CD4-positive, alpha-beta memory T cell (primary cell): ENCODE measurements at regions of chr16 and their contacts with region 1.

Region 1: DNA sequence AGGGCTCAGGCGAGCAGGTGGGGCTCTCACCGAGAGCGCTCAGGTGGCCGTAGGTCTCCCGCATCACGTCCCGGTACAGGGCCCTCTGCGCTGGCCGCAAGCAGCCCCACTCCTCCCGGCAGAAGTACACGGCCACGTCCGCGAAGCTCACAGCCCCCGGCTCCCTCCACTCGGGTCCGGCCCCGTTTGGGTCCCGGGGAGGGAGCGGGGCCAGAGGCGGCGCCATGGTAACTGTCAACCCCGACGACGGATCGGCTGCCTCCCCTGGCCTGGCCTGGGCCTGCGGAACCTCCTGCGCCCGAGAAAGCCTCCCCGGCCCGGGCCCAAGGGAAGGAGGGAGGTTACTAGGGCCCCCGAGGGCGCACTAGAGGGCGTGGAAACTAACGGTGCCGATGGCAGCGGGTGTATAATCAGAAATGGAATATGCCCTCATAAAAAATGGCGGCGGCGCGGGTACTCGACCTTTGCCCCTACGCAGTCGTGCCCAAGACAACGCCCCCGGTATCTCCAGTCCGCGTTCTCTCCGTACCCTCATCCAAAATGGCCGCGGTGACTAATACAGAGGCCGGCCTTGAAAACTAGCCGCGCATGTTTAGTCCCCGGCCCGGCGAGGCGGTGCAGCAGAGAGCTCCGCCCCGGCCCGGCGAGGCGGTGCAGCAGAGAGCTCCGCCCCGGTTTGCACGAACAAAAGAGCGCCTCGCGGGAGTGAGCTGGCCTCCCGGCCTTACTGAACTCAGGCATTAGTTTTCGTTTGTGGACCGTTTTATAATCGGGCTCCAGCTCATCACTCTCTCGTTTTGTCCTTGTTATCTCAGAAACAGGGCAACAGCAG is at the start of gene ZNF764:
- DNase-seq: peak; percentile 94 to 98 (median 96)
- H3K4me3 ChIP-seq: peak within 1 kb of the TSS; percentile 58 to 75
- H3K4me3 Mint-ChIP-seq: peak within 1 kb of the TSS; percentile 88 to 94 (median 92)
- H3K27ac ChIP-seq: peak within 1 kb of the TSS; percentile 95
- H3K27ac Mint-ChIP-seq: peak within 1 kb of the TSS; percentile 93 to 97 (median 95)
- H3K4me1 ChIP-seq: peaks cover 54% of the 10 kb centered on the region
- H3K4me1 Mint-ChIP-seq: peaks cover 19 to 55% (median 37%) of the 10 kb centered on the region in 4 donors
- H3K27me3 ChIP-seq: no peaks in the 10 kb centered on the region
- H3K27me3 Mint-ChIP-seq: no peaks in the 10 kb centered on the region
- total RNA-seq, gene ZNF764: 28.9 to 29.3 TPM

Region 2: GRCh38 chr16:30445408-30446202 is 112.6 kb before region 1 on chr16 and contains the start of gene SEPHS2:
- CTCF ChIA-PET with region 1: interaction called, 18 read pairs
- POLR2A ChIA-PET with region 1: no interaction called
- intact Hi-C with region 1: no loop called
- DNase-seq: peak; percentile 93 to 98 (median 94)
- H3K4me3 ChIP-seq: peak within 1 kb of the TSS; percentile 92 to 94
- H3K4me3 Mint-ChIP-seq: peak within 1 kb of the TSS; percentile 89 to 98 (median 96)
- H3K27ac ChIP-seq: peak within 1 kb of the TSS; percentile 96
- H3K27ac Mint-ChIP-seq: peak within 1 kb of the TSS; percentile 87 to 98 (median 96)
- H3K4me1 ChIP-seq: peaks cover 42% of the 10 kb centered on the region
- H3K4me1 Mint-ChIP-seq: peaks cover 24 to 44% (median 36%) of the 10 kb centered on the region in 4 donors
- H3K27me3 ChIP-seq: no peaks in the 10 kb centered on the region
- H3K27me3 Mint-ChIP-seq: no peaks in the 10 kb centered on the region
- total RNA-seq, gene SEPHS2: 42.0 to 44.4 TPM

Region 3: DNA sequence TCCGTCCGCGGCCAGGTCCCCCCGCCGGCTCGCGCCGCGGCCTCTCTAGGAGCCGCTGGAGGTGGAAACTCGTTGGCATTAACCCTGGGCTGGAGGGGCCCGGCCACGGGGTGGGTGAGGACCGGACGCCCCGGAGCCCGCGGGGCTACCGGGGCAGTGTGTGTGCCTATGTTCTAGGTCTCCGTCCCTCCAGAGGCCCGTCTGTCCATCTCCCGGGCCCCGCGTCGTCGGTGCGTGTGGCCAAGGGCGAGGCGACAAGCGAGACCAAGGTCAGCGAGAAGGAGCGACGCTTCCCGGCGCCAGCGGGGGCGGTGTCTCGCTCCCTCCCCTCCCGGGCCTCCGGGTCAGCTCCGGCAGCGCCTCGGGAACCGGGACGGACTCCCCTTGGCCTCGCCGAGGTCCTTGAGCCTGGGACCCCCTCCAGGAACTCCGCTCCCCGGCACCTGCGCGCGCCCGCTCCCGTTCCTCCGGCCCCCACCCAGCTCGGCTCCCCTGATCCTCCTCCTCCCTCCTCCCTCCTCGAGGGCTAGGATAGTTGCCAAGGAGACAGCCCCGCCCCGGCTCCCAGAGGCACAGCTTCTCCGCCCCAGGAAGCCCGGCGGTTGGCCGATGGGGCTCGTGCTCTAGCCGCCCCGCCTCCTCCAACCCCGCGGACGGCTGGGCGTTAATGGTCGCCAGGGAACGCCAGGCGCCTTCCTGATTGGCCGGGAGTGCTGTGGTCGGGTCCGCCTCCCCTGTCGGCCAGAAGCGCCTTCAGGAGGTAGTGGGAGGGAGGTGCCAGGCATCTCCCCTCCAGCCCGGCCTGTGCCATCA is 31.1 kb before region 1 on chr16:
- CTCF ChIA-PET with region 1: interaction called, 16 read pairs
- POLR2A ChIA-PET with region 1: interaction called, 457 read pairs
- intact Hi-C with region 1: loop called (anchors 1 kb)
- DNase-seq: peak; percentile 81 to 92 (median 82)
- H3K4me3 ChIP-seq: peak overlapping the region in 1 of 2 donors; percentile 75
- H3K4me3 Mint-ChIP-seq: peak overlapping the region; percentile 81 to 88 (median 85)
- H3K27ac ChIP-seq: peak overlapping the region; percentile 72
- H3K27ac Mint-ChIP-seq: peak overlapping the region; percentile 86 to 95 (median 89)
- H3K4me1 ChIP-seq: peaks cover 43% of the 10 kb centered on the region
- H3K4me1 Mint-ChIP-seq: peaks cover 24 to 46% (median 34%) of the 10 kb centered on the region in 4 donors
- H3K27me3 ChIP-seq: no peaks in the 10 kb centered on the region
- H3K27me3 Mint-ChIP-seq: no peaks in the 10 kb centered on the region

Region 4: DNA sequence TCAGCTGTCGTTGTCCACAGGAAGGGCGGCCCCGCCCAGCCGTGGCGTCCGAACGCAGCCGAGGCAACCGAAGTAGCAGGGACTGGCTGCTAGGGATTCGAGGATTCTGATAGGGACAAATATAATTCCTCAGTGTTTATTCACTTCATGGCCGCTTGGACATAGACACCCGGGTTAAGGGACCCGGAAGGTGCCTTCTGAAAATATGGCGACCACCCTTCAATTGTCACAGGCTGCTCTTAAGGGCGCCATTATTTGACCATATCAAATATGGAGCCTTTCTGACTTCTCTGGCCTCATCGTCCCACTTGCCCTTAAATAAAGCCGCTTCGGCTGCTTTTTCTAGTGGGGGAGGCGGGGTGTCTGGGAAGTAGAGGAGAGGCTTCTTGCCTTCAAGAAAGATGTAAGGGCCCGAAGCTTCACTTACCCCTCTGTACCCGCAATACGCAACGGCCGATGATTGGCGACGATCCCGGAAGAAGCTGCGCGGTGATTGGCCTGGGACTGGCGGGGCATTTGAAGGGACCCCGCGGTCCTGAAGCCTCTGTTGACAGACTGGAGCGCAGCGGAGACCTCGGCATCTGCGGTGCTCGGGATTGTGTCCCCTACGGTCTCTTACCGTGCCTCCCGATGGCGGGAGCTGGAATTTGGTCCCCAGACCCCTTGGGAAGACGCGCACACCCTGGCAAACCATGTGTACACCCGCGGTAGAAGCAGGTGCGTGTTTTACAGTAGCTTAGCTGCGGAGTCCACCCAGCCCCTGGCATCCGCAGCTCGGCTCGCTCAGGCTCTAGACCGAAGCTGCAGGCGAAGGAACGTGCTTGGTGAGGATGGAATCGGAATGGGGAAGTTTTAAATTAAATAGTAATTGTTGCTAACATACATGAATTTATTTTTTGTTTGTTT is 13.8 kb after region 1 on chr16 and contains the start of gene ZNF688:
- CTCF ChIA-PET with region 1: interaction called, 22 read pairs
- POLR2A ChIA-PET with region 1: interaction called, 188 read pairs
- intact Hi-C with region 1: loop called (anchors 1 kb)
- DNase-seq: peak; percentile 94 to 100 (median 97)
- H3K4me3 ChIP-seq: peak within 1 kb of the TSS; percentile 65 to 71
- H3K4me3 Mint-ChIP-seq: peak within 1 kb of the TSS; percentile 86 to 96 (median 91)
- H3K27ac ChIP-seq: peak within 1 kb of the TSS; percentile 90
- H3K27ac Mint-ChIP-seq: peak within 1 kb of the TSS; percentile 96 to 97 (median 97)
- H3K4me1 ChIP-seq: peaks cover 50% of the 10 kb centered on the region
- H3K4me1 Mint-ChIP-seq: peaks cover 22 to 51% (median 36%) of the 10 kb centered on the region in 4 donors
- H3K27me3 ChIP-seq: no peaks in the 10 kb centered on the region
- H3K27me3 Mint-ChIP-seq: no peaks in the 10 kb centered on the region
- total RNA-seq, gene ZNF688: 21.4 to 22.7 TPM

Region 5: DNA sequence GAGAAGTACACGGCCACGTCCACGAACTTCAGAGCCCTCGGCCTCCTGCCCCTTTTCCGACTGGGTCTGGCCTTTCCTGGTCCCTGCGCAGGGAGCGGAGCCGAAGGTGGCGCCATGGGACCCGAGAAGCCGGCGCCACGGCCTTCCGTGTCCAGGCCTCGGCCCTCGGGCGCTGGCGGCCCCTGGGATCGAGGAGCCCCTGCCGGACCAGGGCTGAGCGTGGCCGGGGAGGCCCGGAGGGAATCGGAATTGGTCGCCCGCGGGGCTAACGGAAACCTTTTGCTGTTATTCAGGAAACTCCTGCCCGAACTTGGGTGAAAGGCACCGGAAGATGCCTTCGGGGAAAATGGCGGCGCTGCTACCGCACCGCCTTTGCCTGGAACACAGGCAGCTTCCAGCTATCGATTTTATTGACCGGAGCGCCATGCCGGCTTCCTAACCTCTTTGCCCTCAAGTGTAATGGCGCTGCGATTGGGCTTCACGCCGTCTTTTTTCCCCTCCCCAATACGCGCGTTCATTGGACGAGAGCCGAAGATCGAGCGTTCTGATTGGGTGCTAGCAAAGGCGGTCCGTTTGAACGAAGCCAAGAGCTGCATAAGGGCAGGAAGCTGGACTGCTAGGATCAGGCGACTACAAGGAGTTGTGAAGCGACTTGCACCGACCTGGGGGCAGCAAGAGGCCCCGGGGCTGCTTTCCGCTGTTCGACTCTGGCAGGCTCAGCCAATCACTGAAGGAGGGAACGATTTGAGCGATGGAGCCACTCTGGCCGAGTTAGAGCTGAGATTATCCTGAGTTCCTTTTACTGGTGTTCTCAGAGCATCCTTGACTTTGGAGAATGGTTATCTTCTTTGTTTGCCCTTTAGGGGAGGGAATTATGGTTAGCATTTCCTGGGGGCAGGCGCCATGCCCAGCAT is 52.0 kb after region 1 on chr16 and contains the start of gene ZNF689:
- CTCF ChIA-PET with region 1: interaction called, 5 read pairs
- POLR2A ChIA-PET with region 1: interaction called, 18 read pairs
- intact Hi-C with region 1: no loop called
- DNase-seq: peak; percentile 92 to 98 (median 95)
- H3K4me3 ChIP-seq: peak within 1 kb of the TSS; percentile 71 to 99
- H3K4me3 Mint-ChIP-seq: peak within 1 kb of the TSS; percentile 85 to 96 (median 94)
- H3K27ac ChIP-seq: peak within 1 kb of the TSS; percentile 97
- H3K27ac Mint-ChIP-seq: peak within 1 kb of the TSS; percentile 93 to 98 (median 96)
- H3K4me1 ChIP-seq: peaks cover 21% of the 10 kb centered on the region
- H3K4me1 Mint-ChIP-seq: peaks cover 10 to 18% (median 13%) of the 10 kb centered on the region in 4 donors
- H3K27me3 ChIP-seq: no peaks in the 10 kb centered on the region
- H3K27me3 Mint-ChIP-seq: no peaks in the 10 kb centered on the region
- total RNA-seq, gene ZNF689: 13.1 to 14.5 TPM

Region 6: GRCh38 chr16:30650369-30651123 is 92.4 kb after region 1 on chr16 and contains the start of gene PRR14:
- CTCF ChIA-PET with region 1: interaction called, 6 read pairs
- POLR2A ChIA-PET with region 1: interaction called, 14 read pairs
- intact Hi-C with region 1: no loop called
- DNase-seq: peak; percentile 96 to 99 (median 97)
- H3K4me3 ChIP-seq: peak within 1 kb of the TSS; percentile 99
- H3K4me3 Mint-ChIP-seq: peak within 1 kb of the TSS; percentile 95 to 100 (median 99)
- H3K27ac ChIP-seq: peak within 1 kb of the TSS; percentile 96
- H3K27ac Mint-ChIP-seq: peak within 1 kb of the TSS; percentile 97 to 100 (median 99)
- H3K4me1 ChIP-seq: peaks cover 20% of the 10 kb centered on the region
- H3K4me1 Mint-ChIP-seq: peaks cover 11 to 32% (median 18%) of the 10 kb centered on the region in 4 donors
- H3K27me3 ChIP-seq: no peaks in the 10 kb centered on the region
- H3K27me3 Mint-ChIP-seq: peaks cover 0 to 2% of the 10 kb centered on the region in 2 donors
- total RNA-seq, gene PRR14: 92.0 to 100 TPM

Region 7: GRCh38 chr16:30715737-30716445 is 157.7 kb after region 1 on chr16:
- CTCF ChIA-PET with region 1: no interaction called
- POLR2A ChIA-PET with region 1: no interaction called
- intact Hi-C with region 1: no loop called
- DNase-seq: peak; percentile 33 to 80 (median 45)
- H3K4me3 ChIP-seq: no peak overlapping the region
- H3K4me3 Mint-ChIP-seq: peak overlapping the region; percentile 2 to 86 (median 45)
- H3K27ac ChIP-seq: peak overlapping the region; percentile 18
- H3K27ac Mint-ChIP-seq: peak overlapping the region; percentile 80 to 98 (median 93)
- H3K4me1 ChIP-seq: peaks cover 21% of the 10 kb centered on the region
- H3K4me1 Mint-ChIP-seq: peaks cover 26 to 44% (median 34%) of the 10 kb centered on the region in 4 donors
- H3K27me3 ChIP-seq: no peaks in the 10 kb centered on the region
- H3K27me3 Mint-ChIP-seq: no peaks in the 10 kb centered on the region

Region 8: DNA sequence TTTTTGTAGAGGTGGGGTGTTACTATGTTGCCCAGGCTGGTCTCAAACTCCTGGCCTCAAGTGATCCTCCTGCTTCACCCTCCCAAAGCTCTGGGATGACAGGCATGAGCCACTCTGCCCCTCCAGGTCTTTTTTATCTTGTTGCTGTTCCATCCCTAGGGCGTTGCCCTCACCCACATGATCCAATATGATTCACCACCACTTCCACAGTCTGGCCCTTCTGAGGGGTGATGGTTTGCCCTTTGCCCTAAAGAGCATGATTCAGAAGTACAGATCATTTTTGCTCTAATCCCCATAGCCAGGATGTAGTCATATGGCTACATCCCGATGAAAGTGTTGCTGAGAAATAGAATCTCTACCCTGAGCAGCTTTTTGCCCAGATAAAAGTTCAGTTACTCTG is 494.0 kb after region 1 on chr16:
- CTCF ChIA-PET with region 1: no interaction called
- POLR2A ChIA-PET with region 1: no interaction called
- intact Hi-C with region 1: no loop called
- DNase-seq: no peak
- H3K4me3 ChIP-seq: no peak overlapping the region
- H3K4me3 Mint-ChIP-seq: no peak overlapping the region
- H3K27ac ChIP-seq: no peak overlapping the region
- H3K27ac Mint-ChIP-seq: no peak overlapping the region
- H3K4me1 ChIP-seq: no peaks in the 10 kb centered on the region
- H3K4me1 Mint-ChIP-seq: peaks cover 0 to 2% (median 0%) of the 10 kb centered on the region in 4 donors
- H3K27me3 ChIP-seq: no peaks in the 10 kb centered on the region
- H3K27me3 Mint-ChIP-seq: no peaks in the 10 kb centered on the region